Endothelial cell of umbilical vein (primary cell): ENCODE measurements at regions of chr2 and their contacts with region 1.

Region 1: GRCh38 chr2:25664183-25664964 is 9.0 kb downstream of the DTNB start:
- DNase-seq: peak; percentile 83
- H3K4me3 ChIP-seq: no peak overlapping the region
- H3K27ac ChIP-seq: no peak overlapping the region
- H3K4me1 ChIP-seq: peaks cover 4% of the 10 kb centered on the region
- H3K27me3 ChIP-seq: no peaks in the 10 kb centered on the region
- CTCF ChIP-seq: peak; percentile 77 to 79
- POLR2A ChIP-seq: no peak

Region 2: DNA sequence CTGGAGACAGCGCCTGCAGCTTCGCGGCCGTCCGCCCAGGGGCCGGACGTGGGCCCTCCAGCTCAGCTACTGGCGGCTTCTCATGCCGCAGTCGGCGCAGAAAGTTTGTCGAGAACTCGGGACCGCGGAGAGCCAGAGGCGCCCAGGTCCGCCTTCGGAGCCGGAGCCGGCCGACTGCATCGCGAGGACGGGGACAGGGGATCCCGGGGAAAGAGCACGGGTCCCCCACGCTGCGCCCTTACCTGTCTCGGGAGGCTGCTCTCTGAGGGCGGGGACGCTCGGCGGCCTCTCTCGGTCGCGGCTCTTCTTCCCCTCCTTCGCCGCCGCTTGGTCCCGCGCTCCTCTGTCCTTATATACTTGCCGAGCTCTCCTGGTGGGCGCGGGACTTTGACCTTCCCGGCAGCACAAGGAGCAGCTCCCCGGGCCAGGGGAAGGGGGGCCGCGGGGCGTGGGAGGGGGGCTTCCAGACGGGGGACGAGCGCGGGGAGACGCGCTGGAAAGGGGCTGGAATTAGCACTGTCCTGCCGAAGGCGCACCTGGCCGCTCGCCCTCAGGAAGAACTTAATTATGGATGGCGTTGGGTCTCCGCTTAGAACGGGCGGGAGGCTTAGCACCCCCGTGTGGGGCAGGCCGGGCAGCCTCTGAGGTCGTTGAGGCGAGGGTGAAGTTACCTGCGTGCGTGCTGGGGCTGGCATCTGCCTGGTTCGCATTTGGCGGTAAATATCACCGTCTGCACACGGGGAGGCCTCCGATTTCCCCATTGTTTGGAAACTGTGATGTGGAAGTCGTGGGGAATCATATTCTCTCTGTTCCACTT is 495.9 kb before region 1 on chr2 and contains the start of gene POMC:
- CTCF ChIA-PET with region 1: no interaction called
- POLR2A ChIA-PET with region 1: no interaction called
- dilution Hi-C with region 1: no loop called
- intact Hi-C with region 1: no loop called
- DNase-seq: peak; percentile 22
- H3K4me3 ChIP-seq: peak within 1 kb of the TSS in 1 of 3 experiments; percentile 26
- H3K27ac ChIP-seq: no peak within 1 kb of the TSS
- H3K4me1 ChIP-seq: peaks cover 2% of the 10 kb centered on the region
- H3K27me3 ChIP-seq: peaks cover 61 to 70% of the 10 kb centered on the region in 2 experiments
- CTCF ChIP-seq: no peak
- POLR2A ChIP-seq: no peak
- total RNA-seq, gene POMC: 0.69 and 2.7 TPM in 2 replicates

Region 3: DNA sequence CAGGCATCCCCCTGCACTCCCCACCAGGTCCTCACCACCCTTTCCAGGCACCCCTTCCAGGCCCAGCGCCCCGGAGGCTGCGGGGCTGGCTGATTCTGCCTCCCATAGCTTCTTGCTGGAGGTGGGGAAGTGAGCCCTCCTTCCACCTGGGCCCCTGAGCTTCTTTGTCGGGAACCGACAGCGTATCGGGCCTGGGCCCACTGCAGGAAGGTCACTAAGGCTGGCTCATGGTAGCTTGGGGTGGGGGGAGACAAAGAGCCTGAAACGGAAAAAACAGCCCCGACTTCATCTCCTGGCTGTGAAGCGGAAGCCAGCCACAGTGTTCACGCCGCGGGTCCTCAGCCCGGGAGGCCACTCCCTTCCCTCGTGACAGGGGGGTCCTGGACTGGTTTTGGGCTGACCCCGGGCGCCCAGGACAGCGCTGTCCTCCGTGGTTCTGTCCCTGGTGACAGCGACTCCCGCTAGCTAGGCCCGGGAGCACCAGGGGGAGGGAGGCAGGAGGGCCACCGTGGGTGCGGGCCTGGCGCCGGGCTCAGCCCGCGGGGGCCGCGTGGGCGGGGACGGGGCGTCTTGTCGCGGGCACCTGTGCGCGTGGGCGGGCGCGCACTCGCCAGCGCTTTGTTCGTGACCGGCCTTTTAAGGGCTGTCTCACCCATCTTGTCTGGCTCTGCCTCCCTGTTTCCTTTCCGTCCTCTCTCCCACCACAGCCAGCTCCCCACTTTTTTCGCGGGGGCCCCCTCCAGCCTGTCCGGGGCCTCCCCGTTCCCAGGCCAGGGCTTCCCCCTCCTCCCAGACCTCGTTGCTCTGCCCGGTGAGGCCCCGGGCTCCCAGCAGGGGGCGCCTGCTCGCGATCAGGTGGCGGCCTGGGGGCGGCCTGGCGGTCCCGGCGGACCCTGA is 387.6 kb before region 1 on chr2:
- CTCF ChIA-PET with region 1: interaction called, 10 read pairs
- POLR2A ChIA-PET with region 1: no interaction called
- dilution Hi-C with region 1: no loop called
- intact Hi-C with region 1: no loop called
- DNase-seq: peak; percentile 61
- H3K4me3 ChIP-seq: peak overlapping the region in 1 of 3 experiments; percentile 9
- H3K27ac ChIP-seq: peak overlapping the region; percentile 25
- H3K4me1 ChIP-seq: peaks cover 15% of the 10 kb centered on the region
- H3K27me3 ChIP-seq: no peaks in the 10 kb centered on the region
- CTCF ChIP-seq: peak; percentile 83 to 91
- POLR2A ChIP-seq: no peak

Region 4: DNA sequence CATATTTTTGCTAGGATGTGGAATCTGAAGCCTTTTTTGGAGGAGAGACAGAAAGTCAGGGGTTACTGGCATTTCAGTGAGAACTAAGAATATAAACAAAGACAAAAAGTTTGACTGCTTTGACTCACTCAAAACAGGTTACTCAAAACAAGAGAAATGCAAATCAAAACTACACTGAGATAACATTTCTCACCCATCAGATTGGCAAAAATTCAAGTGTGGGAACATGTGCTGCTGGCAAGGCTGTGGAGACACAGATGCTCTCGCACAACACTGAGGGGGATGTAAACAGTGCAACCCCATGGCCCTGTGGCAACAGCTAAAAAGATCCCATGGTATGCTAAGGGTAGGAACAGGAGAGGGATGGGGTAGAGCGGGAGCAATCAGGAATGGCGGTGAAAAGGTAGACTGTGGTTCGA is 77.6 kb before region 1 on chr2:
- CTCF ChIA-PET with region 1: interaction called, 13 read pairs
- POLR2A ChIA-PET with region 1: no interaction called
- dilution Hi-C with region 1: no loop called
- intact Hi-C with region 1: no loop called
- DNase-seq: peak; percentile 34
- H3K4me3 ChIP-seq: no peak overlapping the region
- H3K27ac ChIP-seq: no peak overlapping the region
- H3K4me1 ChIP-seq: peaks cover 11% of the 10 kb centered on the region
- H3K27me3 ChIP-seq: no peaks in the 10 kb centered on the region
- CTCF ChIP-seq: no peak
- POLR2A ChIP-seq: no peak

Region 5: DNA sequence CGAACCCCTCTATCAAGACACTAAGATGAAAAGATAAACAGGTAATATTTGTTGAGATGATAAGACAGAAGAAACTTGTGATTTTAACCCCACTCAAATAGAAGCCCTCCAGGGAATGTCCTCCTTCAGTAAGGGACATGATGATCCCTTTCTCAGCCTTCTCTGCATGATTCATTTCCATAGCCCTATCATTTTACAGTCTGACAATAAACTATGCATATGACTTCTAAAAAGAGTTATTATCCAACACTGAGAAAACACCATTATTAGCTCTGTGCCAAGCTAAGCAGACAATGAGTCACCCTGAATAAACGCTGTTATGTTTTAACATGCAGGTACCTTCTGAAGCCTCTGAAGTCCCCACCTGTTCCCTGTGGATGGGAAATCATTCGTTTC is 45.7 kb before region 1 on chr2:
- CTCF ChIA-PET with region 1: interaction called, 561 read pairs
- POLR2A ChIA-PET with region 1: no interaction called
- dilution Hi-C with region 1: no loop called
- intact Hi-C with region 1: no loop called
- DNase-seq: peak; percentile 97
- H3K4me3 ChIP-seq: peak overlapping the region in 2 of 3 experiments; percentile 34 to 65
- H3K27ac ChIP-seq: peak overlapping the region; percentile 99
- H3K4me1 ChIP-seq: peaks cover 45% of the 10 kb centered on the region
- H3K27me3 ChIP-seq: no peaks in the 10 kb centered on the region
- CTCF ChIP-seq: no peak
- POLR2A ChIP-seq: no peak

Region 6: GRCh38 chr2:25644396-25644795 is 20.0 kb before region 1 on chr2:
- CTCF ChIA-PET with region 1: interaction called, 14 read pairs
- POLR2A ChIA-PET with region 1: no interaction called
- dilution Hi-C with region 1: no loop called
- intact Hi-C with region 1: no loop called
- DNase-seq: no peak
- H3K4me3 ChIP-seq: no peak overlapping the region
- H3K27ac ChIP-seq: no peak overlapping the region
- H3K4me1 ChIP-seq: no peaks in the 10 kb centered on the region
- H3K27me3 ChIP-seq: no peaks in the 10 kb centered on the region
- CTCF ChIP-seq: no peak
- POLR2A ChIP-seq: no peak

Region 7: GRCh38 chr2:25700221-25700660 is 35.9 kb after region 1 on chr2:
- CTCF ChIA-PET with region 1: interaction called, 49 read pairs
- POLR2A ChIA-PET with region 1: no interaction called
- dilution Hi-C with region 1: no loop called
- intact Hi-C with region 1: no loop called
- DNase-seq: peak; percentile 73
- H3K4me3 ChIP-seq: no peak overlapping the region
- H3K27ac ChIP-seq: no peak overlapping the region
- H3K4me1 ChIP-seq: peaks cover 14% of the 10 kb centered on the region
- H3K27me3 ChIP-seq: peaks cover 0 to 4% of the 10 kb centered on the region in 2 experiments
- CTCF ChIP-seq: peak; percentile 63
- POLR2A ChIP-seq: no peak